ENCODE measurements at regions of chr17 and their contacts with region 1.

Region 1: GRCh38 chr17:7856883-7857723 is at the start of gene NAA38:
- DNase-seq: peak; percentile 97
- H3K4me3 Mint-ChIP-seq: no peak within 1 kb of the TSS
- H3K27ac Mint-ChIP-seq: no peak within 1 kb of the TSS
- H3K4me1 Mint-ChIP-seq: peaks cover 8% of the 10 kb centered on the region
- H3K27me3 Mint-ChIP-seq: no peaks in the 10 kb centered on the region
- total RNA-seq, gene NAA38: 69.8 to 76.9 TPM

Region 2: GRCh38 chr17:7834962-7835813 is 21.9 kb before region 1 on chr17:
- CTCF ChIA-PET with region 1: interaction called, 24 read pairs
- POLR2A ChIA-PET with region 1: interaction called, 30 read pairs
- DNase-seq: peak; percentile 89
- H3K4me3 Mint-ChIP-seq: peak overlapping the region; percentile 95
- H3K27ac Mint-ChIP-seq: peak overlapping the region; percentile 91
- H3K4me1 Mint-ChIP-seq: peaks cover 52% of the 10 kb centered on the region
- H3K27me3 Mint-ChIP-seq: peaks cover 20% of the 10 kb centered on the region

Region 3: DNA sequence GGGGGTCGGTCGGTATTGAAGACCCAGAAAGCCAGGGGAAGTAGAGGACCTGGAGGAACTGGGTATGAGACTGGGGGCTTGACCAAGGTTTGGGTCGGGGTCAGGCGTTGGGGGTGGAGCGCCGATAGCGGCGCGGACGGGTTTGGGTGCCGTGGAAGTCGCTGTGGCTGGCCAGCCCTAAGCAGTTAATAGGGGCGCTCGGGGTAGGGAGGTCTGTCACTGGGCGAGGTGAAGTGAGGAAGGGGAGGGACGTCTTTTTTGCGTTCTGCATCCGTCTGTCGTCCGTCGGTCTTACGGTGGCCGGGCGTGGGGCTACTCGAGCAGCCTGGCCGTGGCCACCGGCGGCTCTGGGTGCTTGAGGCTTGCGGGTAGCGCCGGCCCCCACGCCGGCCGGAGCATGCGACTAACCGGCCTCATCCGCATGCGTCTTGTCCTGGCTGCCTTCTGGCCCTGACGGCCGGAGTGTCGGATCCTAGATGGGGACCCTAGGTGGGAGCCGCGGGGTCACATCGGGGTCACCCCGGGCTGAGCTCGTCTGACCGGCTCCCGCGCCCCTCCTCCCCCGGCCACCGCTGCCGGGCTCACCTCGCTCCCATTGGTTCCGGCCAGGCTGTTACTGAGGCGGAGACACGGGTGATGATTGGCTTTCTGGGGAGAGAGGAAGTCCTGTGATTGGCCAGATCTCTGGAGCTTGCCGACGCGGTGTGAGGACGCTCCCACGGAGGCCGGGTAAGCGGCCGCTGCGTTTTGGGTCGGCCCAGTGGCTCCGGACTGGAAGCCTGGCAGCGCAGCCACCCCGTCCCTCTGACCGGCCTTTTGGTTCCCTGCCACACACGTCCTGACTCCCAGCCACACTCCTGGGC is 12.6 kb before region 1 on chr17:
- CTCF ChIA-PET with region 1: interaction called, 18 read pairs
- POLR2A ChIA-PET with region 1: interaction called, 32 read pairs
- DNase-seq: peak; percentile 89
- H3K4me3 Mint-ChIP-seq: peak overlapping the region; percentile 97
- H3K27ac Mint-ChIP-seq: peak overlapping the region; percentile 97
- H3K4me1 Mint-ChIP-seq: peaks cover 35% of the 10 kb centered on the region
- H3K27me3 Mint-ChIP-seq: no peaks in the 10 kb centered on the region

Region 4: GRCh38 chr17:7867881-7868329 is 10.8 kb after region 1 on chr17:
- CTCF ChIA-PET with region 1: interaction called, 12 read pairs
- POLR2A ChIA-PET with region 1: interaction called, 11 read pairs
- DNase-seq: peak; percentile 34
- H3K4me3 Mint-ChIP-seq: peak overlapping the region; percentile 33
- H3K27ac Mint-ChIP-seq: peak overlapping the region; percentile 62
- H3K4me1 Mint-ChIP-seq: peaks cover 23% of the 10 kb centered on the region
- H3K27me3 Mint-ChIP-seq: no peaks in the 10 kb centered on the region

Region 5: DNA sequence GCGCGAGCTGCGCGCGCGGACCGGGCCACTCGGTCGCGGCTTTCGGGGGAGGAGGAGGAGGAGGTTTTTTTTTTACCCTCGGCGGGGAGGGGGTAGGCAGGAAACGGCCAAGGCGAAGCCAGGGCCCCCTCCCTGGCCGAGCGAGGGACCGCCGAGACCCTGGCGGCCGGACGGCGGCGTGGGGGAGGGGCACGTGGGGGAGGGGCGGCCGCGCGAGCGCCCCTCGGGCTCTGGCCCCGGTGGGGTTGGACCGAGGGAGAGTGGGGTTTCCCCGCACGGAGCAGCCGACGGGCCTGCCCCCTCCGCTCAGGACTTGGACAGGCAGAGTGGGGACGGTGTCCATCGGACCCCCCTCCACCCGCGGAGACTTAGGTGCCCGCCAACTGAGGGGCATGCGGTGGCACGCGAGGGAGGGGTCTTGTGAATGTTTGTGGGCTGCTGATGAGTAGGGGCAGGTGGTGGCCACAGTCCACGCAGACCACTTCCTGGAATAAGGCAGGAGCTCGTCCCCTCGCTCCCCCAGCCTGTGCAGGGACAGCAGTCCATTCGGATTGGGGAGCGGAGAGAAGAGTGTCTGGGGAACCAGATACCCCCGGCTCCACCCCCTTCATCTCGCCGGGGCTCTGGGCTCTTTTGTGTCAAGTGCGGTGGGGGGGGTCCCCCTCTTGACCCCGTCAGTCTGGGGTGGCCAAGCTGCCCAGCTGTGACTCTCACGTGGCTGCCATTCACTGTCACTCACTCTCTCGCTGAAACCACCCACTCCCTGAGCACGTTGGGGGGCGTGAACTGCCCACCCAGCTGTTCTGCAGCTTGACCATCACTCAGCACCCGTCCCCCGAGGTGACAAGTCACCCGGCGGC is 28.5 kb after region 1 on chr17:
- CTCF ChIA-PET with region 1: interaction called, 8 read pairs
- POLR2A ChIA-PET with region 1: interaction called, 12 read pairs
- DNase-seq: peak; percentile 53
- H3K4me3 Mint-ChIP-seq: no peak overlapping the region
- H3K27ac Mint-ChIP-seq: peak overlapping the region; percentile 55
- H3K4me1 Mint-ChIP-seq: peaks cover 3% of the 10 kb centered on the region
- H3K27me3 Mint-ChIP-seq: no peaks in the 10 kb centered on the region

Region 6: GRCh38 chr17:8029135-8029534 is 172.0 kb after region 1 on chr17:
- CTCF ChIA-PET with region 1: no interaction called
- POLR2A ChIA-PET with region 1: no interaction called
- DNase-seq: no peak
- H3K4me3 Mint-ChIP-seq: no peak overlapping the region
- H3K27ac Mint-ChIP-seq: no peak overlapping the region
- H3K4me1 Mint-ChIP-seq: no peaks in the 10 kb centered on the region
- H3K27me3 Mint-ChIP-seq: peaks cover 38% of the 10 kb centered on the region

Measured in activated CD4-positive, alpha-beta memory T cell treated with anti-CD3 and anti-CD28 coated beads, Interleukin-2, amount 10 ng/mL, durations not matched to agents 7 days and 5 days (primary cell).